Posterior cingulate gyrus (tissue), 11 donors: ENCODE measurements at regions of chr4 and their contacts with region 1.

Region 1: DNA sequence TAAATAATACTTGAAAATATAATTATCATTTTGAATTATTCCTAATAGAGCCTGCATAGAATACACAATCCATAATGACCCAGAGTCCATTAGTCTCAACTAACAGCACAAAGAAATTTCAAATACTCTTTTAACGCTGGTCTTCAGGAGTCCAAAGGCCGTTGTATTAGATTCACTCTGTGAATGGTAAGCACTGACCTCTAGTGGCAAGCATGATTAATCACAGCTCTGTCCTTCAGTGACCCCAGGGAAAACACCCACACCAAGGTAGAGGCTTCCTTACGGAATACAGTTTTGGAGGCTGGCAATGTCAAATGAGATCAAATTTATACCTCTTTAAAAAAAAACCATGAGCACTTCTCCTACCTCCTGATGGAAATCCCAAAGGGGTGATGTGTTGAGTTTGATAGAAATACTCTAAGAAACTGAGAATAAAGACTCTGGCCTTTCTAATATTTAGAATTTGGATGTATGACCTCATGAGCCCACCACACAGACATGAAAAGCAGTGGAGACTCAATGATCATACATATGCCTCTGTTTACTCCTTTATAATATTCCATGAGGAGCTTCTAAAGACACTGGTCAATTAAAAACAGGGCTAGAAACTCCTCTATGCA is 147.2 kb upstream of the DKK2 start:
- DNase-seq: peak in 1 of 10 donors; percentile 3

Region 2: GRCh38 chr4:106369456-106370060 is 813.7 kb before region 1 on chr4:
- intact Hi-C with region 1: loop called (anchors 5 kb)
- DNase-seq: peak in 2 of 10 donors; percentile 14 to 16

Region 3: GRCh38 chr4:107037199-107037584 is 146.1 kb before region 1 on chr4:
- intact Hi-C with region 1: loop called (anchors 5 kb)
- DNase-seq: peak; percentile 35 to 95 (median 62)

Region 4: DNA sequence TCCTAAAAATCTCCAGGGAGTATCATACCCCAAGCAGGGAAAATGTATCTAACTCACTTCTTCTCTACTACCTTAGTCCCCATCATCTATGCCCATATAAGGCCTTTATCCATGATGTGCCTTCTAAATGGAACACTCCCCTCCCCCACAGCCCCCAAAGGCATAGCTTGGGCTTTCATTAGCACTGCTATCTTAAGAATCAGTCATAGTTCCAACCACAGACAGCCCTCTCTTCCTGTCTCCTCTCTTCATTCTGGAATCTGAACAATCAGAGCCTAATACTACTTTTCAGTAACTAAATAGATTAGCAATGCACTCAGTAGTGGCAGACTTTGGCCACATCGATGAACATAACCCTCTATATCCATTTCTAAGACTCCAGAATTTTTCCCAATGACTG is 166.0 kb after region 1 on chr4:
- intact Hi-C with region 1: no loop called
- DNase-seq: no peak